GM13977 (cell line): ENCODE measurements at regions of chr2 and their contacts with region 1.

Region 1: GRCh38 chr2:20962939-20963557 is 80.8 kb downstream of the APOB start:
- DNase-seq: peak; percentile 78
- CTCF ChIP-seq: peak; percentile 91

Region 2: GRCh38 chr2:20525041-20526035 is 437.7 kb before region 1 on chr2:
- in situ Hi-C with region 1: no loop called
- DNase-seq: peak; percentile 78
- CTCF ChIP-seq: no peak

Region 3: GRCh38 chr2:20661067-20661980 is 301.7 kb before region 1 on chr2:
- in situ Hi-C with region 1: loop called (anchors 10 kb)
- DNase-seq: peak; percentile 82
- CTCF ChIP-seq: peak; percentile 91

Region 4: GRCh38 chr2:20781656-20782265 is 181.3 kb before region 1 on chr2:
- in situ Hi-C with region 1: loop called (anchors 10 kb)
- DNase-seq: no peak
- CTCF ChIP-seq: peak; percentile 79